CD4-positive, alpha-beta T cell (primary cell): ENCODE measurements at regions of chr4 and their contacts with region 1.

Region 1: GRCh38 chr4:88211473-88212252 is 53.2 kb upstream of the ABCG2 start:
- DNase-seq: peak in 10 of 14 experiments; percentile 9 to 76 (median 38)
- ATAC-seq: no peak
- H3K4me3 ChIP-seq: no peak overlapping the region
- H3K4me3 Mint-ChIP-seq: no peak overlapping the region
- H3K27ac ChIP-seq: no peak overlapping the region
- H3K27ac Mint-ChIP-seq: no peak overlapping the region
- H3K4me1 ChIP-seq: no peaks in the 10 kb centered on the region
- H3K4me1 Mint-ChIP-seq: no peaks in the 10 kb centered on the region
- H3K27me3 ChIP-seq: no peaks in the 10 kb centered on the region
- H3K27me3 Mint-ChIP-seq: no peaks in the 10 kb centered on the region
- CTCF ChIP-seq: peak; percentile 82

Region 2: DNA sequence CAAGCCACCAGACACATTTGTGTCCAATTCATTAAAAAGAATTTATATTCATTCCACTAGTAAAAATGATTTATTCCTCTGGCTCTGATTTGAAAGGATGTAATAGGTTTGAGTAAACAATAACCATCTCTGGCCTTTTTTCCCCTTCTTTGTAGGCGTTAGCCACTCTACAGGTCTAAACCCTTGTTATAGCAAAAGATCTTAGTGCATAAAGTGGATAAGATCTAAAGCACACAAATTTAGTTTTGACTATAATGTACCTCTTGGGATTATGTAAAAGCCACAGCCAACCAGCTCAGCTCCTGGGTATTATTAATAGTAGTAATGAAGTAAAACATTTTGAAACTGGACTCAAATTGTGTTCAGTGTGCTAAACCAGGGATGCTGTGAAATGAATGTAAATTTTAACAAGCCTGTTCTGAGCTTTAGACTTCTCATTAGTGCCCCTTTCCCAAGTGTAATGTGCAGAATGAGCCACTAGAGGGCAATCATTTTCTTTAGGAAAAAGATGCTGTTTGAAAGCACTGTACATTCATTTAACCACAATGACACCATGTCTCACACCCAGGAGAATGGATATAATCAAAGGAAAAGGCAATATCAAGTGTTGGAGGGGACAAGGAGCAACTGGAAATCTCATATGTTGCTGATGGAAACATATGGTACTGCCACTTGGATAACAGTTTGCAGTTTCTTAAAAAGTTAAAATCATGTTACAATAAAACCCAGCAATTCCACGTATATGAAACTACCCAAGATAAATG is 1061.0 kb before region 1 on chr4:
- CTCF ChIA-PET with region 1: no interaction called
- POLR2A ChIA-PET with region 1: no interaction called
- intact Hi-C with region 1: loop called in 1 of 2 experiments (anchors 10 kb)
- DNase-seq: peak in 10 of 14 experiments; percentile 14 to 79 (median 42)
- ATAC-seq: peak; percentile 84
- H3K4me3 ChIP-seq: no peak overlapping the region
- H3K4me3 Mint-ChIP-seq: no peak overlapping the region
- H3K27ac ChIP-seq: no peak overlapping the region
- H3K27ac Mint-ChIP-seq: no peak overlapping the region
- H3K4me1 ChIP-seq: no peaks in the 10 kb centered on the region
- H3K4me1 Mint-ChIP-seq: no peaks in the 10 kb centered on the region
- H3K27me3 ChIP-seq: no peaks in the 10 kb centered on the region
- H3K27me3 Mint-ChIP-seq: no peaks in the 10 kb centered on the region
- CTCF ChIP-seq: peak; percentile 97

Region 3: GRCh38 chr4:87497159-87497558 is 714.5 kb before region 1 on chr4:
- CTCF ChIA-PET with region 1: no interaction called
- POLR2A ChIA-PET with region 1: no interaction called
- intact Hi-C with region 1: loop called in 1 of 2 experiments (anchors 2 kb)
- DNase-seq: peak in 4 of 14 experiments; percentile 9 to 21 (median 20)
- ATAC-seq: no peak
- H3K4me3 ChIP-seq: no peak overlapping the region
- H3K4me3 Mint-ChIP-seq: no peak overlapping the region
- H3K27ac ChIP-seq: no peak overlapping the region
- H3K27ac Mint-ChIP-seq: no peak overlapping the region
- H3K4me1 ChIP-seq: no peaks in the 10 kb centered on the region
- H3K4me1 Mint-ChIP-seq: peaks cover 7% of the 10 kb centered on the region
- H3K27me3 ChIP-seq: no peaks in the 10 kb centered on the region
- H3K27me3 Mint-ChIP-seq: no peaks in the 10 kb centered on the region
- CTCF ChIP-seq: no peak

Region 4: GRCh38 chr4:87848622-87849351 is 362.9 kb before region 1 on chr4:
- CTCF ChIA-PET with region 1: interaction called, 3 read pairs
- POLR2A ChIA-PET with region 1: no interaction called
- intact Hi-C with region 1: loop called (anchors 2 kb)
- DNase-seq: peak in 7 of 14 experiments; percentile 2 to 62 (median 27)
- ATAC-seq: peak; percentile 75
- H3K4me3 ChIP-seq: peak overlapping the region; percentile 24
- H3K4me3 Mint-ChIP-seq: peak overlapping the region; percentile 17
- H3K27ac ChIP-seq: no peak overlapping the region
- H3K27ac Mint-ChIP-seq: no peak overlapping the region
- H3K4me1 ChIP-seq: no peaks in the 10 kb centered on the region
- H3K4me1 Mint-ChIP-seq: peaks cover 18% of the 10 kb centered on the region
- H3K27me3 ChIP-seq: peaks cover 0 to 11% of the 10 kb centered on the region in 2 experiments
- H3K27me3 Mint-ChIP-seq: peaks cover 15% of the 10 kb centered on the region
- CTCF ChIP-seq: peak; percentile 66

Region 5: GRCh38 chr4:88033309-88033708 is 178.4 kb before region 1 on chr4:
- CTCF ChIA-PET with region 1: interaction called, 28 read pairs
- POLR2A ChIA-PET with region 1: interaction called, 6 read pairs
- intact Hi-C with region 1: loop called (anchors 1 to 2 kb)
- DNase-seq: peak in 9 of 14 experiments; percentile 5 to 74 (median 13)
- ATAC-seq: peak; percentile 64
- H3K4me3 ChIP-seq: no peak overlapping the region
- H3K4me3 Mint-ChIP-seq: no peak overlapping the region
- H3K27ac ChIP-seq: no peak overlapping the region
- H3K27ac Mint-ChIP-seq: no peak overlapping the region
- H3K4me1 ChIP-seq: no peaks in the 10 kb centered on the region
- H3K4me1 Mint-ChIP-seq: no peaks in the 10 kb centered on the region
- H3K27me3 ChIP-seq: no peaks in the 10 kb centered on the region
- H3K27me3 Mint-ChIP-seq: no peaks in the 10 kb centered on the region
- CTCF ChIP-seq: peak; percentile 67

Region 6: DNA sequence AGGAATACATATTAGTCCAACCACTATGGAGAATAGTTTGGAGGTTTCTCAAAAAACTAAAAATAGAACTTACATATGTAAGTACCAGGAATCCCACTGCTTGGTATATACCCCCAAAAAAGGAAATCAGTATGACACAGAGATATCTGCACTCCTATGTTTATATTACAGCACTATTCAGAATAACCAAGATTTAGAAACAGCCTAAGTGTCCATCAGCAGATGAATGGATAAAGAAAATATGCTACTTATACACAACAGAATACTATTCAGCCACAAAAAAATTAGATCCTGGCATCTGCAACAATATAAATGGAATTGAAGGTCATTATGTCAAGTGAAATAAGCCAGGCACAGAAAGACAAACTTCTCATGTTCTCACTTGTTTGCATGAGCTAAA is 25.8 kb before region 1 on chr4:
- CTCF ChIA-PET with region 1: no interaction called
- POLR2A ChIA-PET with region 1: no interaction called
- intact Hi-C with region 1: no loop called
- DNase-seq: no peak
- ATAC-seq: no peak
- H3K4me3 ChIP-seq: no peak overlapping the region
- H3K4me3 Mint-ChIP-seq: no peak overlapping the region
- H3K27ac ChIP-seq: no peak overlapping the region
- H3K27ac Mint-ChIP-seq: no peak overlapping the region
- H3K4me1 ChIP-seq: no peaks in the 10 kb centered on the region
- H3K4me1 Mint-ChIP-seq: peaks cover 3% of the 10 kb centered on the region
- H3K27me3 ChIP-seq: no peaks in the 10 kb centered on the region
- H3K27me3 Mint-ChIP-seq: no peaks in the 10 kb centered on the region
- CTCF ChIP-seq: no peak

Region 7: GRCh38 chr4:88369936-88370335 is 158.3 kb after region 1 on chr4:
- CTCF ChIA-PET with region 1: no interaction called
- POLR2A ChIA-PET with region 1: no interaction called
- intact Hi-C with region 1: no loop called
- DNase-seq: no peak
- ATAC-seq: no peak
- H3K4me3 ChIP-seq: no peak overlapping the region
- H3K4me3 Mint-ChIP-seq: no peak overlapping the region
- H3K27ac ChIP-seq: no peak overlapping the region
- H3K27ac Mint-ChIP-seq: no peak overlapping the region
- H3K4me1 ChIP-seq: no peaks in the 10 kb centered on the region
- H3K4me1 Mint-ChIP-seq: no peaks in the 10 kb centered on the region
- H3K27me3 ChIP-seq: no peaks in the 10 kb centered on the region
- H3K27me3 Mint-ChIP-seq: no peaks in the 10 kb centered on the region
- CTCF ChIP-seq: no peak

Region 8: DNA sequence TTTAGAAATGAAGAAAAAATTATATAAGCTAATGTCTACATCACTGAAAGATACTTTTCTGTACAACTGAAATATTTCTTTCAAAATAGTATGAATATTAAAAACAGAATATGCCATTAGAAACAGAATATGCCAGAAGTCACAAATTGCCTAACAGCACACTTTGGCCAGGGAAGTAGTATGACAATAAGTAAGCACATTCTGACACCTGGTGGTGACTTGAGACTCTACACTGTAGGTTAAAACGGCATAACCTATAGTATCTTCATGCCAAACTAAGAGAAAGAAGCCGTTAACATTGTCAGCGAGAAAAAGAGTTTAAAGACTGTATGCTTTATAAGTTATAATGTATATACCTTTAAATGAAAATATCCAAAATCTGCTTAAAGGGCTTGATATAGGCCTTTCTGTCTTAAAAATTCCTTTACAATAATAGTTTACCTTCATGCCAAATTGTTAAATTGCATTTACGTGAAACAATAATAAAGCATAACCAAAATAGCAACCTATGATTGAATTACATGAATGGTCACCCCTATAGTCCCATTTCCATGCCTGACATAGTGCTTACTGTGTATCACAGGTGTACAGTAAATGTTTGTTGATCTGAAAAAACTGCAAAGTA is 812.5 kb after region 1 on chr4:
- CTCF ChIA-PET with region 1: no interaction called
- POLR2A ChIA-PET with region 1: no interaction called
- intact Hi-C with region 1: loop called (anchors 5 kb)
- DNase-seq: peak in 12 of 14 experiments; percentile 15 to 86 (median 42)
- ATAC-seq: peak; percentile 100
- H3K4me3 ChIP-seq: no peak overlapping the region
- H3K4me3 Mint-ChIP-seq: no peak overlapping the region
- H3K27ac ChIP-seq: no peak overlapping the region
- H3K27ac Mint-ChIP-seq: no peak overlapping the region
- H3K4me1 ChIP-seq: peaks cover 3% of the 10 kb centered on the region
- H3K4me1 Mint-ChIP-seq: peaks cover 2% of the 10 kb centered on the region
- H3K27me3 ChIP-seq: no peaks in the 10 kb centered on the region
- H3K27me3 Mint-ChIP-seq: no peaks in the 10 kb centered on the region
- CTCF ChIP-seq: peak; percentile 83